Left ventricle myocardium superior (tissue), 1 donor: ENCODE measurements at regions of chr4 and their contacts with region 1.

Region 1: GRCh38 chr4:42656944-42657792 is at the start of gene ATP8A1:
- DNase-seq: peak; percentile 97
- ATAC-seq: peak; percentile 97
- total RNA-seq, gene ATP8A1: 14.0 TPM

Region 2: GRCh38 chr4:42610941-42611340 is 46.2 kb before region 1 on chr4:
- intact Hi-C with region 1: loop called (anchors 5 kb)
- DNase-seq: no peak
- ATAC-seq: peak; percentile 88